HEK293 (cell line): ENCODE measurements at regions of chr1 and their contacts with region 1.

Region 1: GRCh38 chr1:201792534-201793305 is 36.2 kb upstream of the IPO9 start:
- H3K4me3 ChIP-seq: no peak overlapping the region
- H3K27ac ChIP-seq: no peak overlapping the region
- H3K4me1 ChIP-seq: no peaks in the 10 kb centered on the region
- CTCF ChIP-seq: peak; percentile 92

Region 2: DNA sequence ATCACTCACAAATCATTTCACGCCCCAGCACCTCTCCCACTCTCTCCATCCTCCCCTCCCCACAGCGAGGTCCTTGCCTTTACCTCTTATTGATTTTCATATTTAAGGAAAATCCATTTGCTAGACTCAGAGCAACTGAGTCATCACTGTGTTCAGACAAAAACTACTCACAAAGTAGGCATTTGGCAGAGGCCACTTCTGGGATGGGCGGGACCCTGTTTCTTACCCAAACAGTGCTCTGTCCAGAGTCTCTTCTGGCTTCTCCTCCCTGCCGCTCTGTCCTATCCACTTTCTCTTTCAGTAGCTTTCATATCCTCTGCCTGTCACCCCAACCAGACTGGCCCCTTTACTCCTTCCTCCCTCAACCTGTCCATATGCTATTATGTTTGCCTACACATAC is 256.2 kb before region 1 on chr1:
- CTCF ChIA-PET with region 1: interaction called, 52 read pairs
- POLR2A ChIA-PET with region 1: no interaction called
- H3K4me3 ChIP-seq: no peak overlapping the region
- H3K27ac ChIP-seq: no peak overlapping the region
- H3K4me1 ChIP-seq: peaks cover 4% of the 10 kb centered on the region; the same call in 1 of the 2 replicates
- CTCF ChIP-seq: no peak

Region 3: DNA sequence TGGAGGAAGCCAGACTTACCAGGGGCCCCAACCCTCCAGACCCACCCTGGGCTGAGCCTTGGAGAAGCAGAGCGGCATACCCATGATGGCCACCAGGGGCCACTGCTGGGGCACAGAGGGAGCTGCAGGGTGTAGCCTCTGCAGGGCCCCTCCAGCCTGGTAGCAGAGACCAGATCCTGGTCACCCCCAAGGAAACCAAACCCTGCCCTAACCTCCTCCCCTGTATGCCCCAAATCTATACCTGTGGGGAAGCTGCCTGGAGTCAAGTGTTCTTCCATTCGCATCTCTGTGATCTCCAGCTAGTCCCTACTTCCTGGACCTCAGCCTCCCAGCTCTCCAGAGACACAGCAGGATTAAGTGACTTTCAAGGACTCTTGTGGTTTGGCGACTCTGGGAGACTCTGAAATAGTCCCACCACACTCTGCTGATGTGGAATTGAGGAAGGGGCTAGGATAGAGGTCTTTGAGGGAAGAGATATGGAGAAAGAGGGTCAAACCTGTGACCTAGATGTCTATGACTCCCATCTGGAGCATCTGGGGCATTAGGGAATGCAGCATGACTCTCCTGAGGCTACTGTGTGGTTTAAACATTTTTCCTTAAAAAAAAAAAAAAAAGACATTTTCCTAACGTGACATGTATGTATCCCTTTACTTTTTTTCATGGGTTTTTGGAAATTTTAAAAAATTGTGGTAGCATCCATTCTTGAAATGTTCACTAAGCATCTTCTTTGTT is 83.0 kb before region 1 on chr1:
- CTCF ChIA-PET with region 1: interaction called, 593 read pairs
- POLR2A ChIA-PET with region 1: interaction called, 3 read pairs
- H3K4me3 ChIP-seq: no peak overlapping the region
- H3K27ac ChIP-seq: no peak overlapping the region
- H3K4me1 ChIP-seq: peaks cover 12% of the 10 kb centered on the region
- CTCF ChIP-seq: peak; percentile 83

Region 4: DNA sequence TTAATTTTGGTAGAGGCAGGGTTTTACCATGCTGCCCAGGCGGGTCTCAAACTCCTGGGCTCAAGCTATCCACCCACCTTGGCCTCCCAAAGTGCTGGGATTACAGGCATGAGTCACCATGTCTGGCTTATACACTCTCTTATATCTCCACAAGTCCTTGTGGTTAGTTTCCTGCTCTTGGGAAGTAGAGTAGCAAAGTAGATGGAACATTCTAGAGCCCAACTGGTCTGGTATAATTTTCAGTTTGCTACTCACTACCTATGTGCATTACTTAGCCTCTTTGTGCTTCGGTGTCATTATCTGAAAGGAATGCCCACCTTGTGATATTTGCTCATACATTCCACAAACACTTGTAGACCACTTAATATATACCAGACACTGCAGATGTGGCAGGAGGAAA is 60.4 kb before region 1 on chr1:
- CTCF ChIA-PET with region 1: interaction called, 17 read pairs
- POLR2A ChIA-PET with region 1: no interaction called
- H3K4me3 ChIP-seq: no peak overlapping the region
- H3K27ac ChIP-seq: no peak overlapping the region
- H3K4me1 ChIP-seq: no peaks in the 10 kb centered on the region
- CTCF ChIP-seq: no peak

Region 5: DNA sequence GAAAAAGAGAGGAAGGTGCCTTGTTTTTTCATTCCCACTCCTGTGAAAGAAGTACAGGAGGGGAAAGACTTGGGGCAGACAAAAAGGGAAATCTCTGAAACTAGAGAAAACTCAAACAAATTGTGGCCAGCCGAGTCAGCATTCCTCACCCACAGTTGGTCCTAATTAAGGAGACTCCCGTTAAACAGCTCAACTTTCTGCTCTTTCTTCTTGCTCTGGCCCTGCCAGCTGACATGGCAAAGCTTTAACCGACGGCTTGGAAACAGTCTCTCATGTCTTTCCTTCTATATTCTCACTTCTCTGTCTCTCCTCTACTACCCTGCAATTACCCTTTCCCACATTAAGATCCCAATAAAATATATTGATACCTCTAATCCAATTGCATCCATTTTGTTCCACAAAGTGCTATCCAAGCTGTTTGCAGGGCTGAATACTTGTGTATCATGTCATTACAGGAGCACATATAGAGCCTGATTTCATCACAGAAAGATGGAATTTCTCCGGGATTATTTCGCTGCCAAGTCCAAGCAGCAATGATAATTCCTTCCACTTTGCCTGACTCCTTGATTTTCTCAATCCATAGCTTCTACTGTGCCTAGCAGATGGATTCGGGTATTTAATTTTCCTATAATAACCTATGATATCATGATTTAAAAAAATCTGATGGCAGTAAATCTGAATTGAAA is 29.1 kb before region 1 on chr1:
- CTCF ChIA-PET with region 1: interaction called, 12 read pairs
- POLR2A ChIA-PET with region 1: no interaction called
- H3K4me3 ChIP-seq: no peak overlapping the region
- H3K27ac ChIP-seq: no peak overlapping the region
- H3K4me1 ChIP-seq: peaks cover 7% of the 10 kb centered on the region
- CTCF ChIP-seq: no peak

Region 6: GRCh38 chr1:201813226-201813625 is 20.5 kb after region 1 on chr1:
- CTCF ChIA-PET with region 1: interaction called, 28 read pairs
- POLR2A ChIA-PET with region 1: no interaction called
- H3K4me3 ChIP-seq: no peak overlapping the region
- H3K27ac ChIP-seq: no peak overlapping the region
- H3K4me1 ChIP-seq: no peaks in the 10 kb centered on the region
- CTCF ChIP-seq: no peak